MCF 10A (cell line): ENCODE measurements at regions of chr2 and their contacts with region 1.

Region 1: GRCh38 chr2:236352761-236353593 is 88.8 kb upstream of the ASB18 start:
- DNase-seq: peak; percentile 43
- H3K4me3 Mint-ChIP-seq: no peak overlapping the region
- H3K27ac Mint-ChIP-seq: no peak overlapping the region
- H3K4me1 Mint-ChIP-seq: no peaks in the 10 kb centered on the region
- H3K27me3 Mint-ChIP-seq: peaks cover 46% of the 10 kb centered on the region
- CTCF ChIP-seq: peak; percentile 78

Region 2: GRCh38 chr2:237060534-237061312 is 707.7 kb after region 1 on chr2:
- CTCF ChIA-PET with region 1: interaction called, 40 read pairs
- POLR2A ChIA-PET with region 1: interaction called, 3 read pairs
- intact Hi-C with region 1: loop called (anchors 1 kb)
- DNase-seq: peak; percentile 71
- H3K4me3 Mint-ChIP-seq: no peak overlapping the region
- H3K27ac Mint-ChIP-seq: no peak overlapping the region
- H3K4me1 Mint-ChIP-seq: peaks cover 11% of the 10 kb centered on the region
- H3K27me3 Mint-ChIP-seq: no peaks in the 10 kb centered on the region
- CTCF ChIP-seq: peak; percentile 75

Region 3: DNA sequence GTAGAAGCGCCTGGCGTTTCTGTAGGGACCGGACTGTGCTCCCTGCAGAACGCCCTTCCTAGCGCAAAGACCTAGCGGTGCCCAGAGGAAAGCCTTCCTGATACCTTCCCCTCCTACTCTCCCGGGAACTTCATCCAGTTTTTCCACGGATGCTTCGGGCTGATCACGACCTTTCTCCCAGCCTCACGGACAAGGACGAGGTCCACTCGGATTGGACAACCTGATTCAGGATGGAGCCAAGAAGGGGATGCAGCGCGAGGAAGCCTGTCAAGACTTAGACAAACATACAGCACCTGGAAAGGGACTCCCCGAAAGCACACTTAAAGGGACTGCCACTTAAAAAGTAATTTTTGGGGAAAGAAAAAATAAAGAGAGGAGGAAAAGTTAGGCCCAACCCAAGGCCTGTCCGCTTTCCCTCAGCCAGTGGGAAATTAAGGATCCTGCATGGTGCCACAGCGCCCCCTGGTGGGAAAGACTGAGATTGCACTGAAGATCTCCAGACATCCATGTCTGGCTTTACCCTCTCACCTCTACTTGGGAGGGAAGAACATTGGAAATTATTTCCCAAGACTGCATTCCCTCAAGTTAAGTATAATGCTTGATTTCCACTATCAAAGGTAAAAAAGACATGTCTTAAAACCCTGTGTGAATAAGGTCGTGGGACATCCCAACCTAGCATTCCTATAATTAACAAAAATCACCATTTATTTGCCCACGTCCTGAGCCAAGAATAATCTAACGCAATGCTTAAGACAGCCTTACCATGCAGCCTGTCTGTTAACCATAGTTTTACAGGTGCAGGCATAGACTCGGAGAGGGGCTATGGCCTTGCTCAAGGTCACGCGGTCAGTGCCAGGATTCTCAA is 719.3 kb after region 1 on chr2:
- CTCF ChIA-PET with region 1: interaction called, 13 read pairs
- POLR2A ChIA-PET with region 1: interaction called, 3 read pairs
- intact Hi-C with region 1: no loop called
- DNase-seq: peak; percentile 59
- H3K4me3 Mint-ChIP-seq: no peak overlapping the region
- H3K27ac Mint-ChIP-seq: no peak overlapping the region
- H3K4me1 Mint-ChIP-seq: peaks cover 8% of the 10 kb centered on the region
- H3K27me3 Mint-ChIP-seq: no peaks in the 10 kb centered on the region
- CTCF ChIP-seq: peak; percentile 91

Region 4: GRCh38 chr2:237662671-237663093 is 1309.7 kb after region 1 on chr2:
- CTCF ChIA-PET with region 1: no interaction called
- POLR2A ChIA-PET with region 1: no interaction called
- intact Hi-C with region 1: no loop called
- DNase-seq: peak; percentile 93
- H3K4me3 Mint-ChIP-seq: peak overlapping the region; percentile 26
- H3K27ac Mint-ChIP-seq: peak overlapping the region; percentile 71
- H3K4me1 Mint-ChIP-seq: peaks cover 12% of the 10 kb centered on the region
- H3K27me3 Mint-ChIP-seq: peaks cover 15% of the 10 kb centered on the region
- CTCF ChIP-seq: no peak